MCF 10A (cell line): ENCODE measurements at regions of chr1 and their contacts with region 1.

Region 1: DNA sequence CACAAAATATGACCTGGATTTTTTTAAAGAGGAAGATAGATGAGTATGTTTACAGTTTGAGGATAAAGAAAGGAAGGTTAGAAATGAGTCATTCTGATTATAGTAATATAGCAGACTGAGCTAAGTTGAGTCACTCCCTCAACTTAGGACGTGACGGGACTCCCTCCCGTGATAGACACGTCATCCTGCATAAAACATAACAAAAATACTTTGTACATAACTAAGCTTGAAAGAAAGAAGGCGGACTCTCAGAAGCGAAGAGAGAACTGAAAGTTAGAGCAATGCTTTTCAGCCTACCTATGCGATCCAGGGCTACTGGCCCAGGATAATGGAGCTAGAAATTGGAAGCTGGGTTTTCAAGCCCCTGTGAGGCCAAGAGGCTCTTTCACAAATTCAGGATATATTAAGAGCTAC is 53.0 kb upstream of the DESI2 start:
- DNase-seq: peak; percentile 97
- H3K4me3 Mint-ChIP-seq: peak overlapping the region; percentile 77
- H3K27ac Mint-ChIP-seq: peak overlapping the region; percentile 99
- H3K4me1 Mint-ChIP-seq: peaks cover 12% of the 10 kb centered on the region
- H3K27me3 Mint-ChIP-seq: no peaks in the 10 kb centered on the region
- CTCF ChIP-seq: no peak

Region 2: GRCh38 chr1:244536316-244536715 is 63.6 kb before region 1 on chr1:
- CTCF ChIA-PET with region 1: no interaction called
- POLR2A ChIA-PET with region 1: no interaction called
- intact Hi-C with region 1: no loop called
- DNase-seq: no peak
- H3K4me3 Mint-ChIP-seq: no peak overlapping the region
- H3K27ac Mint-ChIP-seq: no peak overlapping the region
- H3K4me1 Mint-ChIP-seq: no peaks in the 10 kb centered on the region
- H3K27me3 Mint-ChIP-seq: no peaks in the 10 kb centered on the region
- CTCF ChIP-seq: no peak

Region 3: GRCh38 chr1:244614113-244614836 is 14.3 kb after region 1 on chr1:
- CTCF ChIA-PET with region 1: interaction called, 33 read pairs
- POLR2A ChIA-PET with region 1: interaction called, 6 read pairs
- intact Hi-C with region 1: no loop called
- DNase-seq: no peak
- H3K4me3 Mint-ChIP-seq: no peak overlapping the region
- H3K27ac Mint-ChIP-seq: no peak overlapping the region
- H3K4me1 Mint-ChIP-seq: no peaks in the 10 kb centered on the region
- H3K27me3 Mint-ChIP-seq: no peaks in the 10 kb centered on the region
- CTCF ChIP-seq: no peak

Region 4: GRCh38 chr1:244636488-244637259 is 36.7 kb after region 1 on chr1:
- CTCF ChIA-PET with region 1: interaction called, 18 read pairs
- POLR2A ChIA-PET with region 1: interaction called, 5 read pairs
- intact Hi-C with region 1: no loop called
- DNase-seq: no peak
- H3K4me3 Mint-ChIP-seq: no peak overlapping the region
- H3K27ac Mint-ChIP-seq: no peak overlapping the region
- H3K4me1 Mint-ChIP-seq: no peaks in the 10 kb centered on the region
- H3K27me3 Mint-ChIP-seq: peaks cover 2% of the 10 kb centered on the region
- CTCF ChIP-seq: no peak

Region 5: GRCh38 chr1:244652699-244653466 is 52.9 kb after region 1 on chr1 and contains the start of gene DESI2:
- CTCF ChIA-PET with region 1: interaction called, 17 read pairs
- POLR2A ChIA-PET with region 1: interaction called, 20 read pairs
- intact Hi-C with region 1: loop called (anchors 1 kb)
- DNase-seq: peak; percentile 100
- H3K4me3 Mint-ChIP-seq: no peak within 1 kb of the TSS
- H3K27ac Mint-ChIP-seq: peak within 1 kb of the TSS; percentile 63
- H3K4me1 Mint-ChIP-seq: peaks cover 17% of the 10 kb centered on the region
- H3K27me3 Mint-ChIP-seq: no peaks in the 10 kb centered on the region
- CTCF ChIP-seq: peak; percentile 86
- total RNA-seq, gene DESI2: 99.0 and 101 TPM in 2 replicates

Region 6: GRCh38 chr1:244788493-244789275 is 188.7 kb after region 1 on chr1:
- CTCF ChIA-PET with region 1: interaction called, 494 read pairs
- POLR2A ChIA-PET with region 1: interaction called, 3 read pairs
- intact Hi-C with region 1: no loop called
- DNase-seq: no peak
- H3K4me3 Mint-ChIP-seq: no peak overlapping the region
- H3K27ac Mint-ChIP-seq: no peak overlapping the region
- H3K4me1 Mint-ChIP-seq: no peaks in the 10 kb centered on the region
- H3K27me3 Mint-ChIP-seq: no peaks in the 10 kb centered on the region
- CTCF ChIP-seq: no peak

Region 7: GRCh38 chr1:244815600-244816099 is 215.7 kb after region 1 on chr1:
- CTCF ChIA-PET with region 1: interaction called, 21 read pairs
- POLR2A ChIA-PET with region 1: no interaction called
- intact Hi-C with region 1: no loop called
- DNase-seq: no peak
- H3K4me3 Mint-ChIP-seq: no peak overlapping the region
- H3K27ac Mint-ChIP-seq: no peak overlapping the region
- H3K4me1 Mint-ChIP-seq: no peaks in the 10 kb centered on the region
- H3K27me3 Mint-ChIP-seq: no peaks in the 10 kb centered on the region
- CTCF ChIP-seq: no peak

Region 8: GRCh38 chr1:244864253-244865027 is 264.5 kb after region 1 on chr1 and contains the start of gene HNRNPU:
- CTCF ChIA-PET with region 1: interaction called, 6 read pairs
- POLR2A ChIA-PET with region 1: interaction called, 17 read pairs
- intact Hi-C with region 1: no loop called
- DNase-seq: peak; percentile 99
- H3K4me3 Mint-ChIP-seq: peak within 1 kb of the TSS; percentile 93
- H3K27ac Mint-ChIP-seq: peak within 1 kb of the TSS; percentile 96
- H3K4me1 Mint-ChIP-seq: peaks cover 32% of the 10 kb centered on the region
- H3K27me3 Mint-ChIP-seq: no peaks in the 10 kb centered on the region
- CTCF ChIP-seq: peak; percentile 51
- total RNA-seq, gene HNRNPU: 454 and 572 TPM in 2 replicates